ENCODE measurements at regions of chr2 and their contacts with region 1.

Region 1: GRCh38 chr2:62774555-62775366 is 69.2 kb downstream of the EHBP1 start:
- DNase-seq: peak; percentile 17
- ATAC-seq: peak; percentile 78
- H3K4me3 ChIP-seq: no peak overlapping the region
- H3K27ac ChIP-seq: no peak overlapping the region
- H3K4me1 ChIP-seq: no peaks in the 10 kb centered on the region
- H3K27me3 ChIP-seq: no peaks in the 10 kb centered on the region
- CTCF ChIP-seq: peak; percentile 49 to 71 (median 56); a peak in 5 of 6 replicates
- EP300 ChIP-seq: no peak
- POLR2A ChIP-seq: no peak
- RAD21 ChIP-seq: peak; percentile 94

Region 2: GRCh38 chr2:61910603-61911002 is 864.2 kb before region 1 on chr2:
- CTCF ChIA-PET with region 1: no interaction called
- POLR2A ChIA-PET with region 1: no interaction called
- RAD21 ChIA-PET with region 1: no interaction called
- SMC1A ChIA-PET with region 1: no interaction called
- in situ Hi-C with region 1: loop called (anchors 5 kb)
- intact Hi-C with region 1: loop called (anchors 5 kb)
- DNase-seq: no peak
- ATAC-seq: no peak
- H3K4me3 ChIP-seq: no peak overlapping the region
- H3K27ac ChIP-seq: no peak overlapping the region
- H3K4me1 ChIP-seq: no peaks in the 10 kb centered on the region
- H3K27me3 ChIP-seq: no peaks in the 10 kb centered on the region
- CTCF ChIP-seq: peak in 2 of 3 experiments; percentile 12 to 19; a peak in 2 of 6 replicates
- EP300 ChIP-seq: no peak
- POLR2A ChIP-seq: no peak
- RAD21 ChIP-seq: no peak

Region 3: GRCh38 chr2:62467475-62468321 is 307.1 kb before region 1 on chr2:
- CTCF ChIA-PET with region 1: interaction called, 249 read pairs
- POLR2A ChIA-PET with region 1: no interaction called
- RAD21 ChIA-PET with region 1: interaction called, 3 read pairs
- SMC1A ChIA-PET with region 1: interaction called, 201 read pairs
- in situ Hi-C with region 1: no loop called
- intact Hi-C with region 1: no loop called
- DNase-seq: no peak
- ATAC-seq: no peak; the same call in 2 of the 3 replicates
- H3K4me3 ChIP-seq: no peak overlapping the region
- H3K27ac ChIP-seq: no peak overlapping the region; the same call in 1 of the 2 replicates
- H3K4me1 ChIP-seq: peaks cover 4% of the 10 kb centered on the region
- H3K27me3 ChIP-seq: no peaks in the 10 kb centered on the region; a peak in 1 of 4 replicates
- CTCF ChIP-seq: no peak
- EP300 ChIP-seq: no peak
- POLR2A ChIP-seq: no peak
- RAD21 ChIP-seq: no peak

Region 4: GRCh38 chr2:62698653-62699052 is 76.1 kb before region 1 on chr2:
- CTCF ChIA-PET with region 1: interaction called, 13 read pairs
- POLR2A ChIA-PET with region 1: no interaction called
- RAD21 ChIA-PET with region 1: interaction called, 4 read pairs
- SMC1A ChIA-PET with region 1: interaction called, 7 read pairs
- in situ Hi-C with region 1: no loop called
- intact Hi-C with region 1: no loop called
- DNase-seq: no peak
- ATAC-seq: no peak
- H3K4me3 ChIP-seq: no peak overlapping the region
- H3K27ac ChIP-seq: no peak overlapping the region
- H3K4me1 ChIP-seq: no peaks in the 10 kb centered on the region
- H3K27me3 ChIP-seq: no peaks in the 10 kb centered on the region
- CTCF ChIP-seq: no peak
- EP300 ChIP-seq: no peak
- POLR2A ChIP-seq: no peak
- RAD21 ChIP-seq: no peak

Region 5: DNA sequence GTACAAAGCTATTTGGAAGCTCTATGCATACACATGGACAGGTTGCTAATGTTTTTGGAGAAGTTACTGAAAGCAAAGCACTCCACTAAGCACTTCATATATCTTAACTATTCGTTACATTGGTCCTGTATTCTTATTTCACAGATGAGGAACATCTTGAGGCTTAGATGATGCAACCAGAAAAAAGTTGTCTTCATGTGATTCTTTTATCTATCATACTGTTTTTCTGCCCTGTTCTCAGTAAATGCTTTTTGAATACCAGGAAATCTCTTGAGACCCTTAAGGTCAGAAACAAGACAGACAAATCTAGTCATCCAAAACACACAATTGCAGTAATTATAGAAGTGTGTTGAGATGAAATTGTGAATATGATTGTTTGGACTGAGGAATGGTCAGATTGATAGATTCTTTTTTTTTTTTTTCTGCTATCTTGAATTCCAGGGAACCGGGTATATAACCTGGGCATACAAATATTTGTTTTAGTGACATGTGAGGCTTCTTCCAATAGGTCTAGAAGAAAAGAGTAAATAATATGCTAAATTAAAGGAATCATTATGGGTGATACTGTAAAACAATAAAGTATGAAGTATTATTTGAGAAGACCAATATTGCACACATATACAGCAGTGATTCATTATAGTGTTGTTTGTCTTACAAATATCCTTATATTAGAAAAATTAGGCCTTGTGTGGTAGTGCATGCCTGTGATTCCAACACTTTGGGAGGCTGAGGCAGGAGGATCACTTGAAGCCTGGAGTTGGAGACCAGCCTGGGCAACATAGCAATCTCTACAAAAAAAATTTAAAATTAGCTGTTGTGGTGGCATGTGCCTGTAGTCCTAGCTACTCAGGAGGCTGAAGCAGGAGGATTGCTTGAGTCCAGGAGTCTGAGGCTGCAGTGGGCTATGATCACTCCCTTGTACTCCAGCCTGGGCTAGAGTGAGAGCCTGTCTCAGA is 35.5 kb before region 1 on chr2:
- CTCF ChIA-PET with region 1: interaction called, 7 read pairs
- POLR2A ChIA-PET with region 1: interaction called, 3 read pairs
- RAD21 ChIA-PET with region 1: interaction called, 4 read pairs
- SMC1A ChIA-PET with region 1: interaction called, 16 read pairs
- in situ Hi-C with region 1: no loop called
- intact Hi-C with region 1: no loop called
- DNase-seq: no peak
- ATAC-seq: no peak
- H3K4me3 ChIP-seq: no peak overlapping the region
- H3K27ac ChIP-seq: no peak overlapping the region
- H3K4me1 ChIP-seq: no peaks in the 10 kb centered on the region
- H3K27me3 ChIP-seq: no peaks in the 10 kb centered on the region
- CTCF ChIP-seq: no peak
- EP300 ChIP-seq: no peak
- POLR2A ChIP-seq: no peak
- RAD21 ChIP-seq: no peak